GM10248 (cell line): ENCODE measurements at regions of chr10 and their contacts with region 1.

Region 1: GRCh38 chr10:102917962-102918816 is at the start of gene CNNM2:
- DNase-seq: peak; percentile 98
- CTCF ChIP-seq: no peak

Region 2: GRCh38 chr10:102476466-102477141 is 441.6 kb before region 1 on chr10:
- CTCF ChIA-PET with region 1: no interaction called
- POLR2A ChIA-PET with region 1: no interaction called
- DNase-seq: no peak
- CTCF ChIP-seq: no peak

Region 3: DNA sequence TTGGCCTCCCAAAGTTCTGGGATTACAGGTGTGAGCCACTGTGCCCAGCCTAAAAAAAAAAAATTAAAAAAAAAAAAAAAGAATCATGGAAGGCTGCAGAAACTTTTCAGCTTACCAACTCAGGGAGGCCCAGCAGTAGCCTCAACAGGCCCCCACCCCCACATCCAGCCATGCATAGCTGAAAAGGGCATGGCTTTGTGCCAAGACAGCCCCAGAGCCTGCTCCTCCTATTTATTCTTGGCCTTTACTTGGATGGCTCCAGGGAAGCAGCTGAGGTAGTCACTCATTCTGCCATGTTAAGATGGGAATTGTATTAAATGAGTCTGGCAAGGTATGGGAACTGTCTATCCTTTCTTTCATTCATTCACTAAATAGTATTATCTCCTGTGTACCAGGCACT is 13.8 kb before region 1 on chr10:
- CTCF ChIA-PET with region 1: interaction called, 52 read pairs
- POLR2A ChIA-PET with region 1: no interaction called
- DNase-seq: no peak
- CTCF ChIP-seq: no peak

Region 4: GRCh38 chr10:103069453-103070331 is 151.5 kb after region 1 on chr10:
- CTCF ChIA-PET with region 1: interaction called, 67 read pairs
- POLR2A ChIA-PET with region 1: interaction called, 3 read pairs
- DNase-seq: peak; percentile 65
- CTCF ChIP-seq: peak; percentile 70

Region 5: GRCh38 chr10:103192451-103193106 is 274.4 kb after region 1 on chr10:
- CTCF ChIA-PET with region 1: interaction called, 16 read pairs
- POLR2A ChIA-PET with region 1: no interaction called
- DNase-seq: peak; percentile 75
- CTCF ChIP-seq: no peak

Region 6: DNA sequence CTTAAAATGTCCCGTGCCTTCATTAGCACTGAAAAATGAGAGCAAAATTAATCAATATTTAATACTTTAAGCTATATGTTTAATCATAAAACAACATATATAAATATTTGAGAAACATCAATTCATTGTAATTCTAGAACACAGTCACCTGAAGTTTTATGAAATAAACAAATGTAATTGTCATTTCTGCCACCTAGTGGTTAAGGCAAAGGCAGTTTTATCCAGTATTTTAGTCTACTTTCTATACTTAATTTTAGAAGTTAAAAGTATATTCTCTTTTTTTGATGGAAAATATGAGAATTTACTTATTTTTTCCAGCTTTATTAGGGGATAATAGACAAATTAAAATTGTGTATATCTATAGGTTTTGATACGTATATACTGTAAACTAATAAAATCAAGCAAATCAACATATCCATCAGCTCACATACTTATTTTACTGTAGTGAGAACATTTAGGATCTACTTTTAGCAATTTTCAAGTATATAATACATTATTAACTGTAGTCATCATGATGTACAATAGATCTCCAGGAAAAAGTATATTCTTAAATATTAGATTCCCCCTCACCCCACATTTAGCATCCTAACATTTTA is 415.8 kb after region 1 on chr10:
- CTCF ChIA-PET with region 1: interaction called, 13 read pairs
- POLR2A ChIA-PET with region 1: no interaction called
- DNase-seq: peak; percentile 35
- CTCF ChIP-seq: peak; percentile 54